HepG2 (cell line): ENCODE measurements at regions of chr1 and their contacts with region 1.

Region 1: GRCh38 chr1:12454406-12455391 is 163.3 kb downstream of the DHRS3 start:
- DNase-seq: no peak
- ATAC-seq: no peak
- H3K4me3 ChIP-seq: no peak overlapping the region
- H3K27ac ChIP-seq: peak overlapping the region; percentile 58
- H3K4me1 ChIP-seq: peaks cover 40% of the 10 kb centered on the region
- H3K27me3 ChIP-seq: no peaks in the 10 kb centered on the region
- CTCF ChIP-seq: no peak
- EP300 ChIP-seq: no peak
- POLR2A ChIP-seq: no peak
- RAD21 ChIP-seq: no peak

Region 2: DNA sequence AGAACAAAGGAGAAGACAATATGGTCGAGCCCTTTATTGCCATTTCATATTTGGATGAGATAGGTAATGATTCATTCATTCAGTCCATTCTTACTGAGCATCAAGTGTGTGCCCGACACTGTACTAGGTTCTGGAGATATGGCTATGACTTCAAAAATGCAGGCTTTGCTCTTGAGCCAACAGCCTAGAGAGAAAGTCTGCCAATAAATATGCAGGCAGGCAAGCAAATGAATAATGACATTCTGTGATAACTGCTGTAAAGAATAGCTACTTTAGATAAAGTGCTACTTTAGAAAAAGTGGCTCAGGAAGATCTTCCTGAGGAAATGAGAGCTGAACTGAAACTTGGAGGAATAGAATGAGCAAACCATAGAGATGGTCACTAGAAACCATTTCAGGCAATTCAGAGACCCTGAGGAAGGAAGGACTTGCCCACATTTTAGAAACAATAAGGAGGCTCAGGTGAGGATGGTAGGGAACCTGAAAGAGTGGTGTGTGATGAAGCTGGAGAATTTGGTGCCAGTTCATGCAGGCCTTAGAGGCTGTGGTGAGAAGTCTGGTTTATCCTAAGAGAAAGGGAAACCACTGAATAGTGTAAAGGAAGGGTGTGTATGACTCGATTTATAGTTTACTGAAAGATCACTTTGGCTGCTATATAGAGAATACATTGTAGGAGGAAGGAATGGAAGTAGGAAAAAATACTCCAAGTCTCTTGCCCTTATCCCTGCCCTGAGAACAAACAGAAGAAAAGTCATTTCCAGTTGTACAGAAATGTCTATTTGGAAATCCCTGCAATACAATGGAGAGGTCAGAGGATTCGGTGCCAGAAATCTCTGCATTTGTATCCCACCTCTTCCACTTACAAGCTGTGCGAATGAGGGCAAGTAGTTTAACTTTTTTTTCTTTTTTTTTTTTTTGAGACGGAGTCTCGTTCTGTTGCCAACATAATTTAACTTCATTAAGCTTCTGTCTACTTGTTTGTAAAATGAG is 56.9 kb before region 1 on chr1:
- CTCF ChIA-PET with region 1: no interaction called
- POLR2A ChIA-PET with region 1: no interaction called
- in situ Hi-C with region 1: no loop called
- intact Hi-C with region 1: no loop called
- DNase-seq: no peak
- ATAC-seq: no peak
- H3K4me3 ChIP-seq: no peak overlapping the region
- H3K27ac ChIP-seq: no peak overlapping the region
- H3K4me1 ChIP-seq: peaks cover 57% of the 10 kb centered on the region
- H3K27me3 ChIP-seq: no peaks in the 10 kb centered on the region
- CTCF ChIP-seq: no peak
- EP300 ChIP-seq: no peak
- POLR2A ChIP-seq: no peak
- RAD21 ChIP-seq: no peak

Region 3: DNA sequence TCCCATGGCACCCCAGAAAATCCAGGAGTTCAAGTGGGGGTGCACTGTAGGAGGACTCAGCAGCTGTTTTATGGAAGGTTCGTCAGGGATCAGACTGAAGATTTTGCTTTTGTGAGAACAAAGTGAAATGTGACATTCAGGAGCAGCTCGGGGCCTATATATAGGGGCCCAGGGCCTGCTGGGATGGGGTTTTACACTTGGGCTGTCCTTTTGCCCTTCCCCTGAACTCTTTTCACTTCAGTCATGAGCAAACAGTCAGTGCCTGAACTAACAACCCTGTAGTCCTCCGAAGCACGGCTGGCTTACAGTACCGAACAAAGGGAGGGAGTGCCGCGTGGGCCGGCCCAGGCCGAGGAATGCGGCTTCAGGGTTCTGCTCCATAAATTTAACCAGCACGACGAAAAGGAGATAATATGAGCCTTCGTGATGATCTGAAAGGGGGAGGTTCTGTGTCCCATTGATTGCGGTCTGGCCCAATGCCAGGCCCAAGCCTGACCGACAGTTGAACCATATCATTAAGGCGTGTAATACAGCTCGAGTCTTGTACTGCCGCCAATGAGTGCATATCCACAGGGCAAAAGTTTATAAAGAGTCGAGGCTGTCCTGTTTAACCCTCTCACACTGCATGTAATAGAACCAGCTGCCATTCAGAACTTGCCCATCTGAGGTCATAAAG is 23.4 kb after region 1 on chr1:
- CTCF ChIA-PET with region 1: no interaction called
- POLR2A ChIA-PET with region 1: interaction called, 11 read pairs
- in situ Hi-C with region 1: no loop called
- intact Hi-C with region 1: no loop called
- DNase-seq: peak; percentile 99
- ATAC-seq: peak; percentile 98
- H3K4me3 ChIP-seq: peak overlapping the region in 1 of 3 experiments; percentile 24; a peak in 2 of 6 replicates
- H3K27ac ChIP-seq: peak overlapping the region; percentile 63
- H3K4me1 ChIP-seq: peaks cover 77% of the 10 kb centered on the region
- H3K27me3 ChIP-seq: no peaks in the 10 kb centered on the region
- CTCF ChIP-seq: no peak
- EP300 ChIP-seq: peak in 1 of 2 experiments; percentile 76; a peak in 2 of 4 replicates
- POLR2A ChIP-seq: peak; percentile 6 to 55; a peak in 3 of 4 replicates
- RAD21 ChIP-seq: peak; percentile 28; the same call in 1 of the 2 replicates